SK-N-SH (cell line): ENCODE measurements at regions of chr19 and their contacts with region 1.

Region 1: DNA sequence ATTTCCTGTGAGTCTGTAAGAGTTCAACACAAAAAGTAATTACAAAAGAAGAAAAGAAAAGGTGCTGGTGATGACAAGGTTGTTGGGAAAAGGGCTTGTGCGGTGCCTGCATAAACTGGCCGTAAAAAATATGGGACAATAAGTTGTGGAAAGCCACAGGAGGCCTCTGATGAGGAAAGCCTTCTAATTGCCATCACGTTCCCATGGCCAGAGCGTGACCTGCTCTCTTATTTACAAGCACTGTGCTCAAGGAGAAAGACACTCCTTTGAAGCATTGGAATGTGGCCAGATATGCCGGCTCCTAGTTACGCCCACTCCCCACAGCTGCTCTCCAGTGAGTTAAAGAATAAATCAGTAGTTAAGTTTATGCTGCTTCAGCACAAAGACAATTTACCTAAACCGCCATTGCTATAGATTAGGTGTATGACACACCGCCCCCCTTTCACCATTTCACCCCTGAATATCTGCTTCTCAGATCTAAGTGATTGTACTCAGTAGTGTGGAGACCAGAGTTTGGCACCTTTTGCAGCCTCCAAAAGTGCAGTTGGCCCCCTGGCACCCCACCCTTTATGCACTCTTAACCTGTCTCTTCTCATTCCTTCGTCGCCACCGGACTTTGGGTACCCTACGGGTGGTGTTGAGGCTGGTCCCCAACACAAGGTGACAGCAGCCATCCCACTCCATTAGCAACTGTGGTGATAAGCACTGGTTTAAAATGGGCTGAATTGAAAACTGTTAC is 8.1 kb upstream of the PGLYRP1 start:
- DNase-seq: no peak
- H3K4me3 ChIP-seq: no peak overlapping the region
- H3K27ac ChIP-seq: no peak overlapping the region
- H3K4me1 ChIP-seq: no peaks in the 10 kb centered on the region
- H3K27me3 ChIP-seq: peaks cover 12% of the 10 kb centered on the region; the same call in 1 of the 2 replicates
- CTCF ChIP-seq: no peak
- EP300 ChIP-seq: no peak
- RAD21 ChIP-seq: no peak

Region 2: DNA sequence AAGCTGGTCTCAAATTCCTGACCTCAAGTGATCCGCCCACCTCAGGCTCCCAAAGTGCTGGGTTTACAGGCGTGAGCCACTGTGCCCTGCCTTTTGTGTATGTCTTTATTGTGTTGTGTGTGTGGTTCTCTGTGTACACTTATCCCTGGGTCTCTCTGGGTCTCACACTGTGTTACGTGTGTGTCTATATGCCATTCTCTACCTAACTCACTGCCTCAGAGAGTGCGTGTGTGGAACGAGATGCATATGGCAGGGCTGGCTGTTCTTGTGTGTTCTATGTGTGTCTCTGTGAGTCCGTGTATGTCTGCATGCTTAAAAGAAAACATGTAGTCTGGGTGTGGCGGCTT is 156.4 kb before region 1 on chr19:
- CTCF ChIA-PET with region 1: no interaction called
- POLR2A ChIA-PET with region 1: no interaction called
- DNase-seq: no peak
- H3K4me3 ChIP-seq: no peak overlapping the region
- H3K27ac ChIP-seq: no peak overlapping the region
- H3K4me1 ChIP-seq: no peaks in the 10 kb centered on the region
- H3K27me3 ChIP-seq: no peaks in the 10 kb centered on the region
- CTCF ChIP-seq: no peak
- EP300 ChIP-seq: no peak
- RAD21 ChIP-seq: no peak

Region 3: DNA sequence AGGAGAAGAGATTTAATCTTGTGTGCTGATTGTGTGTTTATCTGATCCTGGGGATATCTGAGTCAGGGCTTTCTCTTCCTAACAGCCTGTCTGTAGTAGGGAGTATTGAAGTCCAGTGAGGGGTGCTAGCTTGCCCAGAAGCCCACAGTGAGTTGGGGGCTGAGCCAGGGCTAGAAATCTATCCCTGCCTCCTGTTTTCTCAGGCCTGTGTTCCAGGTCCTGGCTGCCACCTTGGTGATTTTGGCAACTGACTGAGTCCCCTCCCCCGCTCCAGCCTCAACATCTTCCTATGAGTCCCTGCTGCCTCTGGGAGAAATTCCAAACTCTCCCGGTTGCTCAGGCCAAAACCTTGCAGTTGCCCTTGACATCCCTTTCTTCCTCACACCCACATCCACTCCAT is 49.6 kb before region 1 on chr19:
- CTCF ChIA-PET with region 1: no interaction called
- POLR2A ChIA-PET with region 1: no interaction called
- DNase-seq: no peak
- H3K4me3 ChIP-seq: no peak overlapping the region
- H3K27ac ChIP-seq: no peak overlapping the region
- H3K4me1 ChIP-seq: no peaks in the 10 kb centered on the region
- H3K27me3 ChIP-seq: no peaks in the 10 kb centered on the region; the same call in 1 of the 2 replicates
- CTCF ChIP-seq: no peak
- EP300 ChIP-seq: no peak
- RAD21 ChIP-seq: no peak

Region 4: DNA sequence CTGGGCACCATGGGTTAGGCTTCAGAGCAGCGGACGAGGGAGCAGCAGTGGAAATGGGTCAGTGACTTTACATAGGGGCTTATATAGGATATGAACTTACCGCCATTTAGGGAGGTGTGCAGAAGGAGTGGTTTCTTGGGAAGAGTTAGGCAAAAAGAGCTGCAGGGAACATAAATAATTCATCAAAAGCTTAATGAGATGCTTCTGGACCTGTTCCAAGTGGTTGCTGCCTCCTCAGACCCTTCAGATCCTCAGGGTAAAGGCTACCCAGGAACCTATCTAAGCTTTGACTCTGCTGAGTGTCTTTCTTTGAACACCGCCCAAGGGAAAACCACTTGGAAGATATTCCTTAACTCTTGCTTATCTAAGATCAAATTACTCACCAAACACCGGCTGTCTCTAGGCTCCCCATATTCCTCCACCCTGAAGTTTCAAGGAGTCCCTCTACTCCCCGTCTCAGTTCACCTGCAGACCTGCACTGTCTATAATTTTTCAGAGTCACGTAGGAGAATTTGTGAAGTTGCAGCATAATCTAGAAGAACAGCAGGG is 10.0 kb after region 1 on chr19 and contains the start of gene IGFL4:
- CTCF ChIA-PET with region 1: interaction called, 91 read pairs
- POLR2A ChIA-PET with region 1: no interaction called
- DNase-seq: no peak
- H3K4me3 ChIP-seq: no peak within 1 kb of the TSS
- H3K27ac ChIP-seq: no peak within 1 kb of the TSS
- H3K4me1 ChIP-seq: no peaks in the 10 kb centered on the region; a peak in 1 of 4 replicates
- H3K27me3 ChIP-seq: peaks cover 66% of the 10 kb centered on the region; the same call in 1 of the 2 replicates
- CTCF ChIP-seq: no peak
- EP300 ChIP-seq: no peak
- RAD21 ChIP-seq: no peak
- polyA plus RNA-seq, gene IGFL4: not detected in 2 replicates

Region 5: GRCh38 chr19:46063201-46063600 is 32.2 kb after region 1 on chr19:
- CTCF ChIA-PET with region 1: interaction called, 24 read pairs
- POLR2A ChIA-PET with region 1: no interaction called
- DNase-seq: no peak
- H3K4me3 ChIP-seq: no peak overlapping the region
- H3K27ac ChIP-seq: no peak overlapping the region
- H3K4me1 ChIP-seq: peaks cover 0 to 4% of the 10 kb centered on the region in 2 experiments; a peak in 1 of 4 replicates
- H3K27me3 ChIP-seq: peaks cover 26% of the 10 kb centered on the region; the same call in 1 of the 2 replicates
- CTCF ChIP-seq: no peak
- EP300 ChIP-seq: no peak
- RAD21 ChIP-seq: no peak

Region 6: DNA sequence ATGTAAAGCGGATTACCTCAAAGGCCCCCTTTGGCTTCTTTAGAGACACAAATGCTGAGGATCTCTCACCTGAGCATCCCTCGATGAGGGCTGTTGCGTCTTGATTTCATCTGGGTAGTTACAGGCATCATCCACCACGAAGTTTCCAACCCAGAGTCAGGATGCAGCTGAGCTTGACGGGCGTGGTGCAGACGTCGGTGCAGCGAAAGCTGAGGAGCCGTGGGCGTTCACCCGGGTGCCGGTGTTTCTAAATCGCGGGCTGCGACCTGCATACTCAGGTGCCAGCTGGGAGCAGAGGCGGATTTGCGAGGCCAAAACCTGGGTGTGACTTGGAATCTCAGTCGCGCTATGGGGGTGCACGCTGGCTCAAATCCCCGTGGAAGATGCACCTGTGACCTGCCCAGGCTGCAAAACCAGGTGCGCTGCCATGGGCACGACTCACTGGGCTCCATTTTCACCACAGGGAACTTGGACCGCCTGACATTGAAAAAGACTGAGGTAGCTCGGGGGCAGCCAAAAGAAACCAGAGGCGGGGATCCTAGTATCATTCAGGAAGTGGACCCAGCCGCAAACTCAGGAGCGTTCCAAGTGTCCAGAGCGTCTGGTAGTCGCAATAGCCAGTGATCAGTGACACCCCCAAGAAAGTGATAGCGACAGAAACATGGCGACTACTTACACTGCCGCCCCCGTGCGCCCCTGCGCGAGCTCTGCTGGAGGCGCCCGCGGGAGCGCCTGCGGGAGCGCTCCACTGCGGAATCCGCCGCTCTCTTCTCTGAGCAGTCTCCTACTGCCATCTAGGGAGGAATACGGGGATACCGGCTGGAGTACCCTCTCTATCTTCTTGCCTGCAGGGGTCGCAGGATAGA is 46.2 kb after region 1 on chr19:
- CTCF ChIA-PET with region 1: interaction called, 76 read pairs
- POLR2A ChIA-PET with region 1: no interaction called
- DNase-seq: peak; percentile 90
- H3K4me3 ChIP-seq: peak overlapping the region; percentile 39 to 52
- H3K27ac ChIP-seq: no peak overlapping the region
- H3K4me1 ChIP-seq: peaks cover 8 to 20% of the 10 kb centered on the region in 2 experiments; a peak in 2 of 4 replicates
- H3K27me3 ChIP-seq: peaks cover 27% of the 10 kb centered on the region
- CTCF ChIP-seq: peak; percentile 99
- EP300 ChIP-seq: no peak
- RAD21 ChIP-seq: peak; percentile 83

Region 7: GRCh38 chr19:46192992-46193650 is 162.1 kb after region 1 on chr19:
- CTCF ChIA-PET with region 1: interaction called, 24 read pairs
- POLR2A ChIA-PET with region 1: no interaction called
- DNase-seq: no peak
- H3K4me3 ChIP-seq: no peak overlapping the region
- H3K27ac ChIP-seq: no peak overlapping the region
- H3K4me1 ChIP-seq: no peaks in the 10 kb centered on the region
- H3K27me3 ChIP-seq: no peaks in the 10 kb centered on the region; the same call in 1 of the 2 replicates
- CTCF ChIP-seq: no peak
- EP300 ChIP-seq: no peak
- RAD21 ChIP-seq: no peak